Right ventricle myocardium inferior (tissue), 1 donor: ENCODE measurements at regions of chr4 and their contacts with region 1.

Region 1: GRCh38 chr4:87026800-87027495 is 92.1 kb downstream of the AFF1 start:
- DNase-seq: no peak
- ATAC-seq: peak; percentile 24

Region 2: GRCh38 chr4:87078987-87079486 is 52.1 kb after region 1 on chr4:
- intact Hi-C with region 1: loop called (anchors 5 kb)
- DNase-seq: no peak
- ATAC-seq: peak; percentile 81